ENCODE measurements at regions of chr7 and their contacts with region 1.

Region 1: DNA sequence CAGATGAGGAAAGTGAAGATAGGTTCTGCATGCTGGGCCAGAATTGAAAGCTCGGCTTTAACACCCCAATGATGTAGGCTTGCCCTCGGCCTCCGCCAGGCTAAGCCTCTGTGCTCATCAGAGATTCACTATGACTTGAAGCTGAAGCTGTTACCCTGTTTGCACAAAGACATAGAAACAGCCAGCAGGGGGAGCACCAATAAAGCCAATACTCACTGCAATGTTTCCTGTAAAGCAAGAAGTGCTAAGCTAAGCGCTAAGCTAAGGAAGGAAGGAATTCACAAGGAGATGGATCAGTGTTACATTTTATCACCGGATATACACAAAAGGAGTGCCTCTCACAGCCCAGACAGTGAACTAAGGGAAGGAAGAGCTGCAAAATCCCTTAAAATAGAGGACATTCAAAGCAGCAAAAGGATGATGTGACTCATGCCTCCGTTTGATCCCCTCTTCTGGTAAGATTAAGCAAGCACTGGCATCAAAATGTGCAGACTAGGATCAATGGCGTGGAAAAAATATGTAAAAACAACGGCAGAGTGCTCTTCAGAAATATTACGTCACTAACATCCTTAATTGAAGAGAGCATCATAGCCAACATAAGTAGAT is 153.8 kb downstream of the COBL start:
- DNase-seq: peak; percentile 62
- H3K4me3 Mint-ChIP-seq: no peak overlapping the region
- H3K27ac Mint-ChIP-seq: no peak overlapping the region
- H3K4me1 Mint-ChIP-seq: peaks cover 15% of the 10 kb centered on the region
- H3K27me3 Mint-ChIP-seq: peaks cover 21% of the 10 kb centered on the region

Region 2: GRCh38 chr7:50467817-50468610 is 694.8 kb before region 1 on chr7:
- intact Hi-C with region 1: loop called (anchors 1 kb)
- DNase-seq: peak; percentile 69
- H3K4me3 Mint-ChIP-seq: no peak overlapping the region
- H3K27ac Mint-ChIP-seq: no peak overlapping the region
- H3K4me1 Mint-ChIP-seq: peaks cover 12% of the 10 kb centered on the region
- H3K27me3 Mint-ChIP-seq: peaks cover 12% of the 10 kb centered on the region

Region 3: GRCh38 chr7:50610521-50611277 is 552.1 kb before region 1 on chr7:
- intact Hi-C with region 1: loop called (anchors 10 kb)
- DNase-seq: peak; percentile 34
- H3K4me3 Mint-ChIP-seq: no peak overlapping the region
- H3K27ac Mint-ChIP-seq: no peak overlapping the region
- H3K4me1 Mint-ChIP-seq: peaks cover 37% of the 10 kb centered on the region
- H3K27me3 Mint-ChIP-seq: peaks cover 18% of the 10 kb centered on the region

Region 4: DNA sequence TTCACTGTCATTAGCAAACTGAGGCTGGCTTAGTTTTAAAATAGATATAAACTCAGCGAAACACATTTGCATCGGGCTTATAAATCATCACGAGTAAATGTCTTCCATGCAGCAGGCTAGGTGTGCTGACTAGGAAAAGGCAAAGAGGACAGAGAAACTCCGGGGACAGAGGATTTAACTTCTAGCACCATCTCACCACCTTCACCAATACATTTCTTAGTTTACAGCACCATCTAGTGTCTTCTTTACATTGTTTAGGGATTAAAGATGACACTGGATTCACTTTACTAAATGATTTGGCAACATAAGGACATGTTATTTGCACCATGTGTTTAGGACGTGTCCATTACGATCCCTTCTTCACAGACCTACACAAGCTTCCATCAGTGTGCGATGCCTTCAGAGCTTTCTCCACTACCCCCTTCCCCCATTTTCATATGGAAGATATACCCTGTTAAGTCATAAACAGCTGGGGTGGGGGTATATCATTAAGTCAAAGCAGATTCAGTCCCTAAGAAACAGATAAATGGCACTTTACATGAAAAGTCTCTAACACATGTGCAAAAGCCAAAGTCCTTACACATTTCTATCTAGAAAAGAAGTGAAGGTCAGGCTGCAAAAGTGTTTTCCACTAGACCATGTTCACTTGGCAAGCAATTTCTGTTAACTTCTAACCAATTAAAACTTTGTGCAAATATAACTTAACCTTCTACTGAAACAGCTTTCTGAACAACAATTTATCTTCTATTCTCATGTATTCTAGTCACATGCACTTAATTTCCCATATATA is 483.4 kb before region 1 on chr7:
- intact Hi-C with region 1: loop called (anchors 5 kb)
- DNase-seq: no peak
- H3K4me3 Mint-ChIP-seq: no peak overlapping the region
- H3K27ac Mint-ChIP-seq: no peak overlapping the region
- H3K4me1 Mint-ChIP-seq: no peaks in the 10 kb centered on the region
- H3K27me3 Mint-ChIP-seq: peaks cover 11% of the 10 kb centered on the region

Region 5: DNA sequence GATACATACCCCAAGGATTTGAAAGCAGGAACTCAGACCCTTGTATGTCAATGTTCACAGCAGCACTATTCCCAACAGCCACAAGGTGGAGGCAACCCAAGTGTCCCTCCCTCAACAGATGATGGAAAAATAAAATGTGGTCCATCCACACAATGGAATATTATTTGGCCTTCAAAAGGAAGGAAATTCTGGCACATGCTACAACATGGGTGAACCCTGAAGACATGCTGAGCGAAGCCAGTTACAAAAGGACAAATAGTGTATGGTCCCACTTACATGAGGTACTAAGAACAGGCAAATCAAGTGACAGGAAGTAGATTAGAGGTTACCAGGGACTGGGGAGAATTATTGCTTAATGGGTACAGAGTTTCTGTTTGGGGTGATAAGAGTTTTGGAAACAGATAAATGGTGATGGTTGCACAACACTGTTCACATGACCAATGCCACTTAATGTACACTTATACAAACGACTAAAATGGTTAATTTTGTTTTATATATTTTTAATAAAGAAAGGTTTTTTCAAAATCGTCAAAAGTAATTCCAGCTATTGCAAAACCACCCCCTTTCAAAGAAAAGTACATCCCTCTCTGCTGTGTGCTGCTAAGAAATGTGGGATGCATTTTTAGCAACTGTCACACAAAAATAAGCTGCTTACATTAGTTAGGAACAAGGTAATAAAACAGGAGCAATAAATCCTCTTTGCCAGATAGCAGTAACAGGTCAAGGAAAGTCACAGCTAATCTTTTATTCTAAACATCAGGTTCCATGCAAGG is 465.8 kb before region 1 on chr7:
- intact Hi-C with region 1: loop called (anchors 1 kb)
- DNase-seq: no peak
- H3K4me3 Mint-ChIP-seq: no peak overlapping the region
- H3K27ac Mint-ChIP-seq: no peak overlapping the region
- H3K4me1 Mint-ChIP-seq: peaks cover 4% of the 10 kb centered on the region
- H3K27me3 Mint-ChIP-seq: peaks cover 5% of the 10 kb centered on the region

Region 6: DNA sequence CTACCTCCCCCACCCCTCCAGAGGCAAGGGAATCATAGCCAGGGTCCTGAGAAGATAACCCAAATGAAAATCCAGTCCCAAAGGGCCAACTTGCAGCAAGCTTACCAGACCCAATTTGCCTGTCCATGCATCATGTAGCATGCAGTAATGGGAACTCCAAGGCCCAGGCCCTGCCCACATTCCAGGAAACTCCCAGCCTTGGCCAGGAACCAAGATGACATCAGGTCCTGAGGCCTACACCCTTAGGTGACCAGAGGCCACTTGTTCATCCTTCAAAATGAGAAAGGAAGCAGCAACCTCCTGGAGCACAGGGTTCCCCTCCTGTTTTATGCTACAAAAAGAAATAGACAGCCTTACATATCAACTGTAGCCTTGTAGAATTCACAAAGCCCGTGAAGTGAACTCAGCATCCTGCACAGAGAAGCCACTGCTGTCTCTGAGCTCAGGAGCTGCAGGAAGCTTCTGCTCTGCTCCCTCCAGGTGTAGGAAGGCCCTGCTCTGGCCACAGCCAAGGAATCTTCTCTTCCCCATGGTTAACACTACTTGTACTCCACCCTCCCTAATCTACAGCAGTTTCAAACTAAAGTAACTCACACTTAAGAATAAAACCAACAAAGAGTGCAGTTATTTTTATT is 349.9 kb before region 1 on chr7:
- intact Hi-C with region 1: no loop called
- DNase-seq: no peak
- H3K4me3 Mint-ChIP-seq: no peak overlapping the region
- H3K27ac Mint-ChIP-seq: no peak overlapping the region
- H3K4me1 Mint-ChIP-seq: no peaks in the 10 kb centered on the region
- H3K27me3 Mint-ChIP-seq: peaks cover 9% of the 10 kb centered on the region

Region 7: DNA sequence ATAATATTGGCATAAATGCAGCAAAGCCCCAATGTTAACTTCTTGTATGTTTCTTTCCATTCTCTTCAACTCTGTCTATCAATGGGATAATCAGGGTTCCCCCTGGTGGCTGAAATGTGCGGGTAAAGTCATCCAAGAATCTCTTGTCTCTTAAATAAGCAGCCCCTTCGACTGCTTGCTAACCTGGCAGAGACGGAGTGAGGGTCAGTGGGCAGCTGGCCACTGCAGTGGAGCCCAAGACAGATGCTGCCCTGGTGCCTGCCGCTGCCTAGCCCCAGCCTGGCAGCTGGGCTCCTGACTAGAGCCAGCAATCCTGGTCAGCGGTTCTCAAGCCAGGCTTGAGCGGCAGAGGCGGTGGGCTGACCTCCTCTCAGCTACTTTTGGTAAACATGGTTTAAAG is 95.1 kb before region 1 on chr7:
- intact Hi-C with region 1: loop called (anchors 1 kb)
- DNase-seq: peak; percentile 17
- H3K4me3 Mint-ChIP-seq: no peak overlapping the region
- H3K27ac Mint-ChIP-seq: no peak overlapping the region
- H3K4me1 Mint-ChIP-seq: no peaks in the 10 kb centered on the region
- H3K27me3 Mint-ChIP-seq: peaks cover 5% of the 10 kb centered on the region

Region 8: DNA sequence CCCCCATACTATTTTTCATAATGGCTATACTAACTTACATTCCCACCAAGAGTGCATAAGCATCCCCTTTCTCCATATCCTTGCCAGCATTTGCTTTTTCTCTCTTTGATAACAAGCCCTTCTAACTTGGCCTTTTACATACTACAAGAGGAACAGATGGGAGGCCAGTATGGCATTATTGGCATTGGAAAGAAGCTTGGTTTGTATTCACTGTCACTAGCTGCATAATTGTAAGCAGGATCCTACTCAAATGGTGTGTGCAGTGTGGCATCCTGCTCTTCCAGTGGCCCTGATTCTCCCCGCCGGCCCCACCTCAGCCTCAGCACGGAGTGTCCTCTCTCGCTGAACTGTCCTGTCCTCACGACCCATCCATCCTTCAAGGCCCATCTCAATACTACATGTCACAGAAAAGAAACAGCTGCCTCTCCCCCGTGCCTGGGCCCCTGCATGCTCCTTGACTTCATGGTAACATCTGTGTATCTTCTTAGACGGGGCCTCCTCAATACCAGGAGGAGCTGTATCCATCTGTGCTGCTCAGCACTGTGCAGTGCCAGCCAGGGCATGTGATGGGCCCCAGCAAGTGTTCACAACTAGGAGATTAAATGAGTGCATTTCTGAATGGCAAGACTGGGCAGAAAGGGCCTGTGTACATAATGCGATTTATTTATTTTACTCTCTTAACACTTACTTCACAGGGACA is 51.4 kb before region 1 on chr7:
- intact Hi-C with region 1: no loop called
- DNase-seq: no peak
- H3K4me3 Mint-ChIP-seq: no peak overlapping the region
- H3K27ac Mint-ChIP-seq: no peak overlapping the region
- H3K4me1 Mint-ChIP-seq: no peaks in the 10 kb centered on the region
- H3K27me3 Mint-ChIP-seq: peaks cover 3% of the 10 kb centered on the region

Region 9: GRCh38 chr7:51198654-51199053 is 35.8 kb after region 1 on chr7:
- intact Hi-C with region 1: no loop called
- DNase-seq: no peak
- H3K4me3 Mint-ChIP-seq: no peak overlapping the region
- H3K27ac Mint-ChIP-seq: no peak overlapping the region
- H3K4me1 Mint-ChIP-seq: no peaks in the 10 kb centered on the region
- H3K27me3 Mint-ChIP-seq: peaks cover 5% of the 10 kb centered on the region

Region 10: DNA sequence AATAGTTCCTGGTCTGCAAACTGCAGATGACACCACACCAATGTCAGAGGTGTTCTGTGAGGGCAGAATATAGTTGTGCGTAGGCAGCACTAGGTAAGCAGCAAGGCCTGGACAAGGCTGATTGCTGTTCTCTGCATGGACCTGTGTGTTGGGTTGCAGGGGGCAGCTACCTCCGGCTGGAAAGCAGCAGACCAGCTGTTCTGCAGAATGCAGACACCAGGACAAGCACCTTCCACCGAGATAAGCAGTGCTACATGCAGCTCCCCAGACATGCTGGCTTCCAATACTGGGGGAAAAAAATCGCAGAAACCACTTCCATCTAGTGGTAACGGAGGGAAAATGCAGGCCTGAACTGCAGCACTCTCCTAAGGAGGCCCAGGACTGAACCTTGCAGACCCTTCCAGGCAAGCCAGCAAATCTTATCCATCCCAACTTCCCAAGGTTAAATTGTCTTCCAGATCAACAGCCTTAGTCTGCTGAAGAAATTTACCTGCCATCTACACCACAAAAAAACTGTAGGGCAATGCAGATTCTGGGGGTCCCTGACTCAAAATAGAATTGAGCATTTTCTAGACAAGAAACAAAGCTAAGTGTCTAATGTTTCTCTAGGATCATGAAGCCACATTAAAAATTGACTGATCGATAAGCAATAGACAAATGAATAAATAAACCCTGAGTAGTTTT is 204.2 kb after region 1 on chr7:
- intact Hi-C with region 1: loop called (anchors 1 kb)
- DNase-seq: no peak
- H3K4me3 Mint-ChIP-seq: no peak overlapping the region
- H3K27ac Mint-ChIP-seq: no peak overlapping the region
- H3K4me1 Mint-ChIP-seq: no peaks in the 10 kb centered on the region
- H3K27me3 Mint-ChIP-seq: no peaks in the 10 kb centered on the region

Measured in activated T-helper 1 cell treated with anti-CD3 and anti-CD28 coated beads, Interleukin-12 subunit alpha, Interleukin-12 subunit beta, Interleukin-2, Interleukin-4 antibody, amounts not matched to agents 30 ng/mL and 10 ng/mL and 1 ng/mL, durations not matched to agents 14 hours and 24 hours and 36 hours (primary cell).